ENCODE measurements at regions of chr4 and their contacts with region 1.

Region 1: DNA sequence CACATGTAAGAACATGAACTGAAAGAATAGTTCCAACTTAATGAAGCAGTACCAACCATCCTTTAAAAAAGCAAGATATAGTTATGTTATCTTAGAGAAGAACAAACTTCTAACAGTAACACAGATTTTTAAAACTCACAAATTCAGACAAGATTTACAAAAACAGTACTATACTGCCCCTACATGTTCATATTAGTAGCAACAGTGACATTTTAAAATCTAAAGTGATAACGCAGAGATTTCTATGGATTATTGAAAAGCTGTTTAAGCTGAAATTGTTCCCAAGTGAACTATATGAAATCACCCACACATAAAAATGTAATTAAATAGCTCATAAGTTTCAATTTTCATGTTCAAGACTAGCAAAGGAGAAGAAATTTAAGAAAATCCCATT is 166.0 kb downstream of the FBXW7 start:
- DNase-seq: no peak
- ATAC-seq: no peak
- H3K4me3 ChIP-seq: no peak overlapping the region
- H3K27ac ChIP-seq: no peak overlapping the region
- H3K4me1 ChIP-seq: peaks cover 0 to 24% (median 3%) of the 10 kb centered on the region in 12 donors
- H3K27me3 ChIP-seq: no peaks in the 10 kb centered on the region
- CTCF ChIP-seq: peak in 10 of 12 donors; percentile 14 to 52 (median 26)
- POLR2A ChIP-seq: no peak

Region 2: GRCh38 chr4:151674804-151675391 is 695.0 kb before region 1 on chr4:
- intact Hi-C with region 1: no loop called
- DNase-seq: peak in 3 of 5 donors; percentile 51 to 74 (median 61)
- ATAC-seq: peak; percentile 70 to 79 (median 72)
- H3K4me3 ChIP-seq: peak overlapping the region in 10 of 12 donors; percentile 10 to 48 (median 38)
- H3K27ac ChIP-seq: peak overlapping the region in 10 of 12 donors; percentile 23 to 76 (median 66)
- H3K4me1 ChIP-seq: peaks cover 0 to 57% (median 8%) of the 10 kb centered on the region in 12 donors
- H3K27me3 ChIP-seq: no peaks in the 10 kb centered on the region
- CTCF ChIP-seq: peak in 4 of 12 donors; percentile 13 to 36 (median 24)
- POLR2A ChIP-seq: no peak

Region 3: GRCh38 chr4:151760712-151761527 is 609.0 kb before region 1 on chr4 and contains the start of gene GATB:
- intact Hi-C with region 1: loop called in 1 of 10 experiments (anchors 10 kb)
- DNase-seq: peak; percentile 94 to 96 (median 94)
- ATAC-seq: peak; percentile 99 to 100 (median 100)
- H3K4me3 ChIP-seq: peak within 1 kb of the TSS; percentile 57 to 91 (median 76)
- H3K27ac ChIP-seq: peak within 1 kb of the TSS; percentile 58 to 85 (median 79)
- H3K4me1 ChIP-seq: peaks cover 0 to 16% (median 7%) of the 10 kb centered on the region in 12 donors
- H3K27me3 ChIP-seq: no peaks in the 10 kb centered on the region
- CTCF ChIP-seq: peak; percentile 44 to 69 (median 54)
- POLR2A ChIP-seq: peak in 1 of 2 donors; percentile 52
- total RNA-seq, gene GATB: 60.7 to 122 (median 83.4) TPM

Region 4: GRCh38 chr4:152045807-152046571 is 323.9 kb before region 1 on chr4:
- intact Hi-C with region 1: loop called in 3 of 10 experiments (anchors 10 kb)
- DNase-seq: peak in 4 of 5 donors; percentile 42 to 77 (median 46)
- ATAC-seq: peak in 3 of 4 donors; percentile 64 to 78 (median 68)
- H3K4me3 ChIP-seq: peak overlapping the region in 7 of 12 donors; percentile 4 to 24 (median 19)
- H3K27ac ChIP-seq: peak overlapping the region in 7 of 12 donors; percentile 23 to 66 (median 57)
- H3K4me1 ChIP-seq: peaks cover 0 to 17% (median 9%) of the 10 kb centered on the region in 12 donors
- H3K27me3 ChIP-seq: peaks cover 0 to 17% (median 0%) of the 10 kb centered on the region in 9 donors
- CTCF ChIP-seq: peak; percentile 44 to 73 (median 50)
- POLR2A ChIP-seq: no peak

Region 5: GRCh38 chr4:152106113-152106763 is 263.7 kb before region 1 on chr4:
- intact Hi-C with region 1: loop called in 1 of 10 experiments (anchors 10 kb)
- DNase-seq: peak in 4 of 5 donors; percentile 63 to 82 (median 73)
- ATAC-seq: peak in 3 of 4 donors; percentile 38 to 72 (median 71)
- H3K4me3 ChIP-seq: no peak overlapping the region
- H3K27ac ChIP-seq: peak overlapping the region in 6 of 12 donors; percentile 6 to 65 (median 30)
- H3K4me1 ChIP-seq: peaks cover 5 to 67% (median 38%) of the 10 kb centered on the region in 12 donors
- H3K27me3 ChIP-seq: no peaks in the 10 kb centered on the region
- CTCF ChIP-seq: no peak
- POLR2A ChIP-seq: no peak

Region 6: GRCh38 chr4:152209772-152210493 is 160.0 kb before region 1 on chr4:
- intact Hi-C with region 1: no loop called
- DNase-seq: no peak
- ATAC-seq: no peak
- H3K4me3 ChIP-seq: no peak overlapping the region
- H3K27ac ChIP-seq: no peak overlapping the region
- H3K4me1 ChIP-seq: peaks cover 0 to 22% (median 11%) of the 10 kb centered on the region in 12 donors
- H3K27me3 ChIP-seq: peaks cover 0 to 5% (median 0%) of the 10 kb centered on the region in 9 donors
- CTCF ChIP-seq: no peak
- POLR2A ChIP-seq: no peak

Region 7: GRCh38 chr4:152408514-152409327 is 38.8 kb after region 1 on chr4:
- intact Hi-C with region 1: no loop called
- DNase-seq: no peak
- ATAC-seq: no peak
- H3K4me3 ChIP-seq: no peak overlapping the region
- H3K27ac ChIP-seq: no peak overlapping the region
- H3K4me1 ChIP-seq: no peaks in the 10 kb centered on the region
- H3K27me3 ChIP-seq: no peaks in the 10 kb centered on the region
- CTCF ChIP-seq: peak; percentile 27 to 63 (median 48)
- POLR2A ChIP-seq: no peak

Region 8: DNA sequence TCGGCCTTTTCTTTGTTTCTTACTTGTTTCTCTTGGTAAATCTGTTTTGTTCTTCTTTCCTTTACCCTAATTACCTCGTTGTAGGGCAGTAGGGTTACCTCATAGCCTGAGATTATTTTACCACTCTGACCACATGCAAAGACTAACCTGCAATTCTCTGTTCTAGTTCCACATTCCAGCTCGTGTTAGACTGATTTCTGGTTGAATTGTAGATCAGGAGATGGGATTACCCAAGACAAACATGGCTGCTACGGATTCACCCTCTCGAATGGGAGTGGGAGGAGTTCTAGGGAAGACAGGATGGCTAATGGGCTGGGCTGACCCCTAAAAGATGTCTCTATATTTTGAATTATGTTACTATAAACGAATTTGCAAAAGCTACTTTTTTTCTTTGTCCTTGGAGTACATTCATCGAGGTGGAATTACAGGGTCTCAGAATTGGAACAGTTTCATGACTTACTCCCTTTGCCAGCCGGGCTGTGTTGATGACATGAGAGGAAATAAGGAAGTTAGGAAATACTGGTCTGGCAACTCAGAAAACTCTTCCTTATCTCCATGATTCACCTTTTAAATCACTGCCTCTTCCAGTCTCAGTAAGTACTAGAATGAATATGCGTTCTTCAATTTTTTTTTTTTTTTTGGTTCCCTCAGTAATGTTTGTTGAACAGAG is 202.7 kb after region 1 on chr4:
- intact Hi-C with region 1: no loop called
- DNase-seq: no peak
- ATAC-seq: no peak
- H3K4me3 ChIP-seq: no peak overlapping the region
- H3K27ac ChIP-seq: no peak overlapping the region
- H3K4me1 ChIP-seq: no peaks in the 10 kb centered on the region
- H3K27me3 ChIP-seq: peaks cover 0 to 6% (median 0%) of the 10 kb centered on the region in 9 donors
- CTCF ChIP-seq: no peak
- POLR2A ChIP-seq: no peak